ENCODE measurements at regions of chr5 and their contacts with region 1.

Region 1: DNA sequence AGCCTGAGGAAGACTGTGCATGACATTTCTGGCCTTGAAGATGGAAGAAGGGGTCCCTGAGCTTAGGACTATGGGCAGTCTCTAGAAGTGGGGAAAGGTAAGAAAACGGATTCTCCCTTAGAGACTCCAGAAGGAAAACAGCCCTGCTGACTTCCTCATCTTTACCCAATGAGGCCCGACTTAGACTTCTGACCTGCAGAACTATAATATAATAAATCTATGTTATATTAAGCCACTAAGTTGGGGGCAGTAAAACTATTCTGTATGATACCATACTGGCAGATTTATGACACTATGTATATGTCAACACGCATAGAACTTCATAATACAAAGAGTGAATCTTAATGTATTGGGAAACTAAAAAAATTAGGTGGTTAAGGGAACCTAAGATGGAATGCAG is 422.0 kb downstream of the PLK2 start:
- DNase-seq: no peak
- H3K4me3 Mint-ChIP-seq: no peak overlapping the region
- H3K27ac Mint-ChIP-seq: no peak overlapping the region
- H3K4me1 Mint-ChIP-seq: no peaks in the 10 kb centered on the region
- H3K27me3 Mint-ChIP-seq: peaks cover 3% of the 10 kb centered on the region

Region 2: GRCh38 chr5:56696900-56697299 is 1341.0 kb before region 1 on chr5:
- CTCF ChIA-PET with region 1: no interaction called
- intact Hi-C with region 1: no loop called
- DNase-seq: peak; percentile 35
- H3K4me3 Mint-ChIP-seq: no peak overlapping the region
- H3K27ac Mint-ChIP-seq: no peak overlapping the region
- H3K4me1 Mint-ChIP-seq: peaks cover 78% of the 10 kb centered on the region
- H3K27me3 Mint-ChIP-seq: no peaks in the 10 kb centered on the region

Region 3: DNA sequence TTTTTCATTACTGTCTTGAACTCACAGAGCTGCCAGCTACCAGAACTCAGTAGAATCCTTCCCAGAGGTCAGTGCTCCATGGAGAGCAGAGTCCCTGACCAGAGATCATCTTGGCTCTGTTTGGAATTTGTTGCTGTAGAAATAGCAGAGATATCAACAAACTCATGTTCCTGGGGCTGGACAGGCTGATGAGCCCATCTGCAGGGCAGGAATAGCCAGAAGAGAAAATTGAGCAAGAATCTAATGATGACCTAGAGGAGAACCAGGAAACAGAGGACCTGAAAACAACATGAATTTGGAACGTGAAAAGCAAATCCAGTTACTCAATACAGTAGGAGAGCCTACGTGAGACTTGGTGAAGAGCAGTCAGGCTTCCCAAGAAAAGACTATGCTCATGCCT is 15.8 kb before region 1 on chr5:
- CTCF ChIA-PET with region 1: no interaction called
- intact Hi-C with region 1: loop called (anchors 1 kb)
- DNase-seq: no peak
- H3K4me3 Mint-ChIP-seq: no peak overlapping the region
- H3K27ac Mint-ChIP-seq: no peak overlapping the region
- H3K4me1 Mint-ChIP-seq: no peaks in the 10 kb centered on the region
- H3K27me3 Mint-ChIP-seq: no peaks in the 10 kb centered on the region